CD8-positive, alpha-beta T cell (primary cell): ENCODE measurements at regions of chr14 and their contacts with region 1.

Region 1: DNA sequence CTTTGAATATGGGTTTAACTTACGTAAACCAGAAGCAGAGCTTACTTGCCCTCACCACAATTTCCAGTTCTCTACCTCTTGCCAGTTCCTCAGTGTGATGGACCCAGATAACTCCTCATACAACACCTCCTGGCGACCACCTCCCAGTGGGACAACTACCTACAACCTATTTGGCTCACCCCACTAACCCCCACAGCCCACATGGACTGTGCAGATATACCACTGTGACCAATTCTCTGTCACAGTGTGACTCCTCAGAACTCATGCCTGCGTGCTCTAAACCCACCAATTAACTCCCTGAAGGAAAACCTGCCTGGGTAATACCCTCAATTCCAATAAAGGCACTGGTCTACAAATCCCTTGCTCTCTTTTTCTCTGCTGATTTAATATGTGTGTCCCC is 311.7 kb downstream of the DIO2 start:
- DNase-seq: no peak
- ATAC-seq: no peak
- H3K4me3 ChIP-seq: no peak overlapping the region
- H3K4me3 Mint-ChIP-seq: no peak overlapping the region
- H3K27ac ChIP-seq: no peak overlapping the region
- H3K27ac Mint-ChIP-seq: no peak overlapping the region
- H3K4me1 ChIP-seq: no peaks in the 10 kb centered on the region
- H3K4me1 Mint-ChIP-seq: no peaks in the 10 kb centered on the region
- H3K27me3 ChIP-seq: no peaks in the 10 kb centered on the region
- H3K27me3 Mint-ChIP-seq: no peaks in the 10 kb centered on the region
- CTCF ChIP-seq: no peak

Region 2: DNA sequence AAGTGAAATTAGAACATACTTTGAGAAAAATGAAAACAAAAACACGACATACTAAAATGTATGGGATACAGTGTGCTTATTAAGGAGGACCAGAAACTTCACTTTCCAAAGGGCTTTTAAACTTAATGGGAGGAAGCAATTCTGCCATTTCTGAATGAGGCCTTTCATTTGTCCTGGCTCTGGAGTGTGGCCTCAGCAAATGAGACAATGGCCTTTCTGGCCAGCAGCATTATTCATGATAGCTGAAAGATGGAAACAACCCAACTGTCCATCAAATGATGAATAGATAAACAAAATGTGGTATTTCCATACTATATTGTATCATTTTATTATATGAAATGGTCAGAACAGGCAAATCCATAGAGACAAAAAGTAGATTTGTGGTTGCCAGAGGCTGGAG is 703.3 kb after region 1 on chr14:
- CTCF ChIA-PET with region 1: no interaction called
- POLR2A ChIA-PET with region 1: no interaction called
- intact Hi-C with region 1: loop called in 1 of 2 experiments (anchors 5 kb)
- DNase-seq: no peak
- ATAC-seq: no peak
- H3K4me3 ChIP-seq: no peak overlapping the region
- H3K4me3 Mint-ChIP-seq: no peak overlapping the region
- H3K27ac ChIP-seq: no peak overlapping the region
- H3K27ac Mint-ChIP-seq: no peak overlapping the region
- H3K4me1 ChIP-seq: no peaks in the 10 kb centered on the region
- H3K4me1 Mint-ChIP-seq: no peaks in the 10 kb centered on the region
- H3K27me3 ChIP-seq: no peaks in the 10 kb centered on the region
- H3K27me3 Mint-ChIP-seq: no peaks in the 10 kb centered on the region
- CTCF ChIP-seq: no peak